K562 (cell line): ENCODE measurements at regions of chr1 and their contacts with region 1.

Region 1: GRCh38 chr1:162056043-162056442 is 13.4 kb upstream of the NOS1AP start:
- DNase-seq: peak; percentile 62 to 70 (median 65)
- ATAC-seq: peak; percentile 99
- H3K4me3 ChIP-seq: no peak overlapping the region
- H3K27ac ChIP-seq: no peak overlapping the region
- H3K4me1 ChIP-seq: no peaks in the 10 kb centered on the region
- H3K27me3 ChIP-seq: peaks cover 0 to 7% of the 10 kb centered on the region in 2 experiments; a peak in 1 of 5 replicates
- CTCF ChIP-seq: peak; percentile 88 to 93 (median 88)
- EP300 ChIP-seq: no peak
- POLR2A ChIP-seq: no peak
- RAD21 ChIP-seq: peak; percentile 91 to 94

Region 2: GRCh38 chr1:162240568-162240967 is 184.5 kb after region 1 on chr1:
- CTCF ChIA-PET with region 1: no interaction called
- POLR2A ChIA-PET with region 1: no interaction called
- in situ Hi-C with region 1: no loop called
- intact Hi-C with region 1: no loop called
- DNase-seq: no peak
- ATAC-seq: no peak
- H3K4me3 ChIP-seq: no peak overlapping the region
- H3K27ac ChIP-seq: no peak overlapping the region
- H3K4me1 ChIP-seq: no peaks in the 10 kb centered on the region
- H3K27me3 ChIP-seq: peaks cover 5 to 14% of the 10 kb centered on the region in 2 experiments; a peak in 3 of 5 replicates
- CTCF ChIP-seq: no peak
- EP300 ChIP-seq: no peak
- POLR2A ChIP-seq: no peak
- RAD21 ChIP-seq: no peak

Region 3: GRCh38 chr1:162373541-162374375 is 317.7 kb after region 1 on chr1:
- CTCF ChIA-PET with region 1: no interaction called
- POLR2A ChIA-PET with region 1: no interaction called
- in situ Hi-C with region 1: no loop called
- intact Hi-C with region 1: loop called (anchors 5 kb)
- DNase-seq: peak in 3 of 4 experiments; percentile 54 to 55 (median 55)
- ATAC-seq: peak; percentile 15; the same call in 1 of the 3 replicates
- H3K4me3 ChIP-seq: no peak overlapping the region
- H3K27ac ChIP-seq: no peak overlapping the region
- H3K4me1 ChIP-seq: peaks cover 18 to 44% of the 10 kb centered on the region in 2 experiments
- H3K27me3 ChIP-seq: no peaks in the 10 kb centered on the region
- CTCF ChIP-seq: no peak
- EP300 ChIP-seq: no peak
- POLR2A ChIP-seq: no peak
- RAD21 ChIP-seq: no peak

Region 4: DNA sequence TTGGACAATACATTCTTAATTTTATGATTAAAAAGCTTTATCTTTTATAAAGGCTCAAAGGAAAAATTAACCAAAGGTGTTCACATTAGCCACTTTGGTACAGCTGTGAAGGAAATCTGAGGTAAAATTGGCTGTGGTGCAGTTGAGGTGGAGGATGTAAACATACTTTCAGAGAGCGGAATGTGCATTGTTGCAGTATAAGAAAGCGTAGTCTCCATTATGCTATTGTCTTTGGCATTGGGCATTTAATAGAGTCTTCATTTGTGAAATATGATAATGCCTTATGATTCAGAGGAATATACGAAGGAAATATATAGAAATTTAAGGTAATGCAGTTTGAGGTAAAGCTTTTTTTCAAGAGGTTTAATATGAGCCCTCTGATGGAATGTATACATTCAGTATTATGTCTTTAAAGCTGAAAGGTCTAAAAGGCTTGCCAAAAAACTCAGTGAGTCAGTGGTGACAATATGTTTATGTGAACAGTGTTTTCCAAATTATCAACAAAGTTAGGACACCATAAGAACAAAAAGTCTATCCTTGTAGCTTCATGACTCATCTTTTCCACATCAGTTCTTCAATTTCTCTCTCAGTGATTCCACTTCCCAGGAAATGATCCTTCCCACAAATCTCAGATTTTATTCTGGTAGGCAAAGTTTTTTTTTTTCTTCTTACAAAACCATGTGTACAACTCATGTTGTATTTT is 549.3 kb after region 1 on chr1:
- CTCF ChIA-PET with region 1: no interaction called
- POLR2A ChIA-PET with region 1: no interaction called
- in situ Hi-C with region 1: no loop called
- intact Hi-C with region 1: loop called (anchors 5 kb)
- DNase-seq: no peak
- ATAC-seq: 0 out of 3 replicates have a peak, but pooled peaks have one; percentile 9
- H3K4me3 ChIP-seq: no peak overlapping the region
- H3K27ac ChIP-seq: no peak overlapping the region
- H3K4me1 ChIP-seq: no peaks in the 10 kb centered on the region
- H3K27me3 ChIP-seq: no peaks in the 10 kb centered on the region
- CTCF ChIP-seq: no peak
- EP300 ChIP-seq: no peak
- POLR2A ChIP-seq: no peak
- RAD21 ChIP-seq: no peak